Sigmoid colon (tissue), 7 donors: ENCODE measurements at regions of chr5 and their contacts with region 1.

Region 1: GRCh38 chr5:55521881-55522280 is 12.9 kb downstream of the PLPP1 start:
- DNase-seq: no peak
- H3K4me3 ChIP-seq: no peak overlapping the region
- H3K27ac ChIP-seq: peak overlapping the region in 1 of 4 donors; percentile 30
- H3K4me1 ChIP-seq: peaks cover 0 to 86% (median 64%) of the 10 kb centered on the region in 4 donors
- H3K27me3 ChIP-seq: no peaks in the 10 kb centered on the region
- CTCF ChIP-seq: no peak
- EP300 ChIP-seq: no peak
- POLR2A ChIP-seq: no peak

Region 2: GRCh38 chr5:55480781-55481180 is 41.1 kb before region 1 on chr5:
- intact Hi-C with region 1: loop called (anchors 5 kb)
- DNase-seq: no peak
- H3K4me3 ChIP-seq: no peak overlapping the region
- H3K27ac ChIP-seq: no peak overlapping the region
- H3K4me1 ChIP-seq: peaks cover 0 to 39% (median 17%) of the 10 kb centered on the region in 4 donors
- H3K27me3 ChIP-seq: no peaks in the 10 kb centered on the region
- CTCF ChIP-seq: no peak
- EP300 ChIP-seq: no peak
- POLR2A ChIP-seq: no peak